Activated CD4-positive, alpha-beta T cell treated with anti-CD3 and anti-CD28 coated beads, Interleukin-2, amount 10 ng/mL, durations not matched to agents 24 days and 14 days (primary cell): ENCODE measurements at regions of chr20 and their contacts with region 1.

Region 1: GRCh38 chr20:49594143-49594930 is 26.4 kb upstream of the PTGIS start:
- DNase-seq: peak; percentile 93
- H3K4me3 Mint-ChIP-seq: peak overlapping the region; percentile 90
- H3K27ac Mint-ChIP-seq: peak overlapping the region; percentile 100
- H3K4me1 Mint-ChIP-seq: peaks cover 79% of the 10 kb centered on the region
- H3K27me3 Mint-ChIP-seq: no peaks in the 10 kb centered on the region

Region 2: DNA sequence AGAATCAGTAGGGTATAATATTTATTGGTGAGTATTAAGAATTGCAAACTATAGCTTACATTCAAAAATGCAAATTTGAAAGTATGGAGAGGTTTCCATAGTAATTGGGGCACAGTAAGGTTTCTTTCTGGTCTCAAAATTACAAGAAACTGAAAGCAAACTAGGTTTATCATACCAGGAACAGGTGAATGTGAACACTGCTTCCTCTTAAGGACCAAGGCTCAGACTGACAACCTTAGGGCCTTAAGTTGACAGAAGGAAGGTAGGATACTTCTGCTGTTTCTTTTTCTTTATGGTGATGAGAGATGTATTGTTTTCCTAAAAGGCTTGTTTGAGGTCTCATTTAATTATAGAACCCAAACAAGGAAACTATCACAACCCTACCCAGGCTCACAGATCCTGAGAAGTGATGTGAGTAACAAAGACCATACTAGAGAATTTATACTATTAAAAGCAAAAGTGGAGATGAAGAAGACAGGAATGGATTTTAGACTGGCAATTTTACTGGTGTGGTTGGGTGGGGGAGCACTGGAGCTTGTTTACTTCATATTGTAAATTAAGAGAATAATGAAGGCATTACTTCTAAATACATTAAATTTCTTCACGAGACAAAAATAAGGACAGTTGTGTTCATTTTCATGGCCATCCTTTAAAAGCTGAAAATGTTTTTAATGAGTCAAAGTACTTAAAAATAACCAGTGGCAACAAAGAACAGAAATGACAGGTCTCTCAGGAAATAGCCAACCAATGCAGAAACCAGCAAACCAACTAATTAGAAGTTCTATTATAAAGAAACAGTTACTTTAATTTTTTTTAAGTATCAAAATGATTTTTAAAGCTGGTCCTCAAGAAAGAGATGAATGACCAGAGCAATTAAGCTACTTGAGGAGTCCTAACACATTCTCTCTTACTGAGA is 427.5 kb before region 1 on chr20:
- intact Hi-C with region 1: loop called (anchors 10 kb)
- DNase-seq: peak; percentile 69
- H3K4me3 Mint-ChIP-seq: peak overlapping the region; percentile 72
- H3K27ac Mint-ChIP-seq: peak overlapping the region; percentile 90
- H3K4me1 Mint-ChIP-seq: peaks cover 49% of the 10 kb centered on the region
- H3K27me3 Mint-ChIP-seq: no peaks in the 10 kb centered on the region

Region 3: GRCh38 chr20:49534255-49534712 is 60.1 kb before region 1 on chr20:
- intact Hi-C with region 1: loop called (anchors 1 kb)
- DNase-seq: peak; percentile 91
- H3K4me3 Mint-ChIP-seq: peak overlapping the region; percentile 25
- H3K27ac Mint-ChIP-seq: peak overlapping the region; percentile 89
- H3K4me1 Mint-ChIP-seq: peaks cover 24% of the 10 kb centered on the region
- H3K27me3 Mint-ChIP-seq: peaks cover 9% of the 10 kb centered on the region

Region 4: GRCh38 chr20:49549811-49550551 is 44.4 kb before region 1 on chr20:
- intact Hi-C with region 1: loop called (anchors 2 kb)
- DNase-seq: no peak
- H3K4me3 Mint-ChIP-seq: no peak overlapping the region
- H3K27ac Mint-ChIP-seq: no peak overlapping the region
- H3K4me1 Mint-ChIP-seq: peaks cover 20% of the 10 kb centered on the region
- H3K27me3 Mint-ChIP-seq: peaks cover 2% of the 10 kb centered on the region

Region 5: GRCh38 chr20:49575551-49576060 is 18.7 kb before region 1 on chr20:
- intact Hi-C with region 1: loop called (anchors 2 kb)
- DNase-seq: no peak
- H3K4me3 Mint-ChIP-seq: no peak overlapping the region
- H3K27ac Mint-ChIP-seq: peak overlapping the region; percentile 46
- H3K4me1 Mint-ChIP-seq: peaks cover 47% of the 10 kb centered on the region
- H3K27me3 Mint-ChIP-seq: peaks cover 8% of the 10 kb centered on the region

Region 6: DNA sequence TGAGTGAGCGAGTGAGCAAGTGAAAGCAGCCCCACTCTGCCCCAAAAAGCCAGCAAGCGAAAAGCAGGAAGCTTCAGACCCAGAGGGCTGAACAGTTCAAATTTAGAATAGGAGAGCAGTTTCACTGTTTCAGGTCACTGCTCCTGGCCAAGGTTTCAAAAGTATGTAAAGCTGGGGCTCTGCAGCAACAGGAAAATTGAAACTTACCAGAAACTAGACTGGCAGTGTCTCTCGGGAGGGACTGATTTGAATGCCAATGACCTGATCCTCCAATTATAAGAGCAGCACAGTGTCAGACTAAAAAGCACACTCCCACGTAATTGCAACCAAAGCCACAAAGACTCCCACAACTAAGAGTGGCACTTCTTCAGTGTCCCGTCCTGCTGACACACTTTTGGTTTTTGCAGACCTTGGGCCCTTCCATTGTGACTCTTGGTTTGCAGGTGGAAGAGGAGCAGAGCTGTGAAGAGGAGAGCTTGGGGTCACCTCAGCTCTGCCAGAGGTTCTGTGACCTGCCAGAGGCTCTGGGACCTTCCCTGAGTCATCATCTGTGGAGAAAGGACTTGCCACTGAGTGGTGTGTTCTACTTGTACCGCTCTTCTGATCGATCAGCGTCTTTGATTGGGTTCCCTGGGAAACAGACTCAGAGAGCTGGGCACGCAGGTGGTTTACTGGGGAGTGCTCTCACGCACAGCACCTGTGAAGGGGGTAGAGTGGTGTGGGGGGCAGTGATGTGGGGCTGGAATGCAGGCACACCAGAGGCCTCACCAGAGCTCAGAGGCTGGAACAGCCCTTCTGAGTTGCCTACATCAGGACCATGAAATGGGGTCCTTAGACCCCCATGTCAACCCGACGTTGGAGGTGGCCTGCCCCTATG is 26.3 kb after region 1 on chr20:
- intact Hi-C with region 1: no loop called
- DNase-seq: peak; percentile 72
- H3K4me3 Mint-ChIP-seq: no peak overlapping the region
- H3K27ac Mint-ChIP-seq: peak overlapping the region; percentile 26
- H3K4me1 Mint-ChIP-seq: peaks cover 4% of the 10 kb centered on the region
- H3K27me3 Mint-ChIP-seq: peaks cover 9% of the 10 kb centered on the region

Region 7: GRCh38 chr20:50509935-50510705 is 915.8 kb after region 1 on chr20 and contains the start of gene PTPN1:
- intact Hi-C with region 1: loop called (anchors 5 kb)
- DNase-seq: peak; percentile 100
- H3K4me3 Mint-ChIP-seq: peak within 1 kb of the TSS; percentile 98
- H3K27ac Mint-ChIP-seq: peak within 1 kb of the TSS; percentile 93
- H3K4me1 Mint-ChIP-seq: peaks cover 44% of the 10 kb centered on the region
- H3K27me3 Mint-ChIP-seq: no peaks in the 10 kb centered on the region
- total RNA-seq, gene PTPN1: 61.4 and 62.9 TPM in 2 replicates